Activated B cell treated with CpG ODN at 0.5 μM for 24 hours (primary cell): ENCODE measurements at regions of chr20 and their contacts with region 1.

Region 1: DNA sequence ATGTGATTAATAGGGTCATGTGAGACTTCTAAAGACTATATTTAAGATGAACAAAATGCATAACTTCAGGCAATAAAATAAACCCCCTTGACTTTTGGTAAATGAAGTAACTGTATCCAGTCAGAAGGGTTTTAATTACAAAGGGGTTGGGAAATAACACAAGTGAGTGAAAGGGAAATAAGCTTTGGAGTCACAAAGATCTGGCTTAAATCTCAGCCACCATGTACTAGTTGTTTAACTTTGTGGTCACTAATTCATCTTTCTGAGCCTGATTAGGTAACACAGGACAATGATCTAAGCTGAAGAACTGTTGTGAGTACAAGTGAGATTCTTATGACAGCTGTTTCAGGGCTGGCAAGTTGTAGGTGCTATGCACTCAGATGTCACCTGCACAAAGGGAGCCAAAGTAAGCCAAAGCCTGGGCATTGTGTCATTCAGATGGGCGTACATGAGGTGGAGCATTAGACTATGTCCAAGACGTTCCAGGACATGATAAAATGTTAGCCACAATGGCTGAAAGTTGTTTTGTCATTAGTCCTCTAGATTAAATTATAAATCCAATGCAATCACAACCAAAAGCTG is 13.8 kb downstream of the TOMM34 start:
- DNase-seq: no peak
- ATAC-seq: no peak
- H3K4me3 Mint-ChIP-seq: no peak overlapping the region
- H3K27ac Mint-ChIP-seq: no peak overlapping the region
- H3K4me1 Mint-ChIP-seq: no peaks in the 10 kb centered on the region
- H3K27me3 Mint-ChIP-seq: no peaks in the 10 kb centered on the region
- CTCF ChIP-seq: no peak

Region 2: DNA sequence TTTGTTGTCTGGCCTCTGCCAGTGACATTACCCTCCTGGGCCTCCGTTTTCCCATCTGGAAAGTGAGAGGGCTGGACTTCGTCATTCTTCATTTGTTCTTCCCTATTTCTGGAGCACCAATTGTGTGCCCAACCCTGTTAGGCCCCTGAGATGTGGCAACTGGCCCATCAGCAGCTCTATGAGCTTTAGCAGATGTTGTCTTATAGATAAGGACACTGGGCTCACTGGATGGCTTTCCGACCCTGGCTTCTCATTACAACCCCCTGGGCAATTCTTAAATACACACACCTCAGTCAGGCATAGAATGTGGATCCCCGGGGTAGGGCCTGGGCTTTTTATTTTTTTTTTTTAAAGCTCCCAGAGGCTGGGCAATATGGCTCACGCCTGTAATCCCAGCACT is 21.8 kb before region 1 on chr20:
- CTCF ChIA-PET with region 1: no interaction called
- POLR2A ChIA-PET with region 1: interaction called, 11 read pairs
- intact Hi-C with region 1: no loop called
- DNase-seq: no peak
- ATAC-seq: no peak
- H3K4me3 Mint-ChIP-seq: no peak overlapping the region
- H3K27ac Mint-ChIP-seq: no peak overlapping the region
- H3K4me1 Mint-ChIP-seq: no peaks in the 10 kb centered on the region
- H3K27me3 Mint-ChIP-seq: no peaks in the 10 kb centered on the region
- CTCF ChIP-seq: no peak